Breast epithelium (tissue), 4 donors: ENCODE measurements at regions of chr4 and their contacts with region 1.

Region 1: GRCh38 chr4:108160741-108161352 is 7.9 kb downstream of the LEF1 start:
- DNase-seq: no peak
- H3K4me3 ChIP-seq: no peak overlapping the region
- H3K27ac ChIP-seq: no peak overlapping the region
- H3K4me1 ChIP-seq: no peaks in the 10 kb centered on the region
- H3K27me3 ChIP-seq: peaks cover 0 to 36% of the 10 kb centered on the region in 2 donors
- CTCF ChIP-seq: no peak
- POLR2A ChIP-seq: no peak

Region 2: GRCh38 chr4:108148316-108148715 is 12.5 kb before region 1 on chr4:
- intact Hi-C with region 1: no loop called
- DNase-seq: no peak
- H3K4me3 ChIP-seq: no peak overlapping the region
- H3K27ac ChIP-seq: no peak overlapping the region
- H3K4me1 ChIP-seq: no peaks in the 10 kb centered on the region
- H3K27me3 ChIP-seq: no peaks in the 10 kb centered on the region
- CTCF ChIP-seq: no peak
- POLR2A ChIP-seq: no peak

Region 3: DNA sequence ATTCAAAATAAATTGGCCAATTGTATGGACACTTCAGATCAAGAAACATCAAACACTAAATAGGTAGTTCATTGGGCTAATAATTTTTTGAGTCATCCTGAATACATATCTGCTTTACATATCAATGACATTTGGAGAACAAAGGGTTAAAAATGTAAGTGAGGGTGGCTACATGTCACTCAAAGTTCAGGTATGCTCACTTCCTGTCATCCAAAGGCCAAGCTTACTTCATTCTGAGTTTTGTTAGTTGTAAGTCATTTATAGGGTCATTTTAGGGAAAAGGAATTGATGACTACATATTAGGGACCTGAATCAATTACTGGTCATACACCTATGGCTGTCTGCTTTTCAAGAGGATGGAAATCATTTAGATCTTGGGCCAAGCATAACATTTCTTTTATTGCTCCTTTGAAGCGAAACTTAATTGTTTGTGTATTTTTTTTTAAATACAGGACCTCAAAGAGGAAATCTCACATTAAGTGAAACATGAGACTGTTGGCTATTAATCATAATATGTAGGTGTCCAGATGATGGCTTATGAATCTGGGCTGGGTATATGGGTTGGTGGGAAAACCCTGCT is 127.1 kb after region 1 on chr4:
- intact Hi-C with region 1: loop called (anchors 5 kb)
- DNase-seq: no peak
- H3K4me3 ChIP-seq: no peak overlapping the region
- H3K27ac ChIP-seq: no peak overlapping the region
- H3K4me1 ChIP-seq: no peaks in the 10 kb centered on the region
- H3K27me3 ChIP-seq: no peaks in the 10 kb centered on the region
- CTCF ChIP-seq: no peak
- POLR2A ChIP-seq: no peak